ENCODE measurements at regions of chr7 and their contacts with region 1.

Region 1: GRCh38 chr7:91940572-91941341 is at the start of gene AKAP9:
- DNase-seq: peak; percentile 81
- ATAC-seq: peak; percentile 94
- H3K4me3 ChIP-seq: peak within 1 kb of the TSS; percentile 76
- H3K27ac ChIP-seq: peak within 1 kb of the TSS; percentile 58
- H3K4me1 ChIP-seq: peaks cover 22% of the 10 kb centered on the region
- H3K27me3 ChIP-seq: no peaks in the 10 kb centered on the region
- CTCF ChIP-seq: no peak
- total RNA-seq, gene AKAP9: 23.9 and 24.9 TPM in 2 replicates

Region 2: DNA sequence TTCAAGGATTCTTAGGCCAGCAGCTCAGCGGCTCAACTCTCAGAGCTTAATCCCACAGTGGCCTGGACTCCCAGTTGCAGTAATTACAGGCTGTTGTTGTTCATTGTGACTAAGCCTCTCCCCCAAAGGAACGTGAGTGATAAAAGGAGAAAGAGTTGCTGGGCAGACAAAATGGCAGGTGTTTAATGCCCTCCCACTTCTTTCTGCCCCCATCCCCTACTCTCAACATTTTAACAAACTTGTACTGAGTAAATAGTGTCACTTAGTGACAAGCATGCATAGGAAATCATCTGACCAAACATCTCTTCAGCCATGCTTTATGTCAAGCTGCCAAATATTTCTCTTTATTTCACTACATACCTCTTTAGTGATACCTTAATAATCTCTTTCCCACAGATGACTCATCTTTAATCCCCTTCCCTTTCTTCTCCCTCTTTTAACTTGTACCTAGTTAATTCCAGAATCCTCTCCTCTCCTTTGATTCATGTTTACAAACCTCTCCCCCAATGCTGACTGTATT is 47.9 kb before region 1 on chr7:
- CTCF ChIA-PET with region 1: no interaction called
- POLR2A ChIA-PET with region 1: no interaction called
- intact Hi-C with region 1: loop called (anchors 5 kb)
- DNase-seq: peak; percentile 86
- ATAC-seq: peak; percentile 87
- H3K4me3 ChIP-seq: no peak overlapping the region
- H3K27ac ChIP-seq: peak overlapping the region; percentile 19
- H3K4me1 ChIP-seq: peaks cover 23% of the 10 kb centered on the region
- H3K27me3 ChIP-seq: no peaks in the 10 kb centered on the region
- CTCF ChIP-seq: no peak

Region 3: DNA sequence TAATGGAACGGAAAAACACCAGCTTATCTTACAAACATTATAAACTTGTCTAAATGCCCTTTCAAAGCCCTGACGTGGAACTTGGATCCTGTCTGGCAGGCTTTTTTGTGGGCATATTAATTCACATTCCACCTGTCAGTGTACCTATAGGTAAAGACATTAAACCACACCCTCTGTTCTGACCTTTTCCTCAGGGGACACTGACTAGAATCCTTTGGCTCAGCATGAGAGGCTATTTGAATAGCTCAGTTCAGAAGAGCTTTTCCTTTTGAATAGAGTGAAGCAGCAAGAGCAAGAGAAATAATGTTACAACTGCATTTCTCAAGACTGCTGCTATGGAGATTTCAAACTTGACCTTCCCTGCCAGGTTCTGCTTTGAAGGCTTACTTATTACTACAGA is 116.6 kb after region 1 on chr7:
- CTCF ChIA-PET with region 1: no interaction called
- POLR2A ChIA-PET with region 1: no interaction called
- intact Hi-C with region 1: loop called (anchors 2 kb)
- DNase-seq: peak; percentile 80
- ATAC-seq: peak; percentile 91
- H3K4me3 ChIP-seq: no peak overlapping the region
- H3K27ac ChIP-seq: peak overlapping the region; percentile 17; the same call in 1 of the 2 replicates
- H3K4me1 ChIP-seq: peaks cover 22% of the 10 kb centered on the region
- H3K27me3 ChIP-seq: no peaks in the 10 kb centered on the region
- CTCF ChIP-seq: no peak

Region 4: GRCh38 chr7:92178927-92179924 is 238.5 kb after region 1 on chr7 and contains the start of gene LRRD1:
- CTCF ChIA-PET with region 1: no interaction called
- POLR2A ChIA-PET with region 1: no interaction called
- intact Hi-C with region 1: loop called (anchors 5 kb)
- DNase-seq: peak; percentile 86
- ATAC-seq: peak; percentile 98
- H3K4me3 ChIP-seq: peak within 1 kb of the TSS; percentile 63
- H3K27ac ChIP-seq: no peak within 1 kb of the TSS
- H3K4me1 ChIP-seq: peaks cover 9% of the 10 kb centered on the region
- H3K27me3 ChIP-seq: no peaks in the 10 kb centered on the region
- CTCF ChIP-seq: peak; percentile 88
- total RNA-seq, gene LRRD1: not detected in 2 replicates

Region 5: GRCh38 chr7:92925876-92926696 is 985.3 kb after region 1 on chr7:
- CTCF ChIA-PET with region 1: no interaction called
- POLR2A ChIA-PET with region 1: no interaction called
- intact Hi-C with region 1: no loop called
- DNase-seq: no peak
- ATAC-seq: no peak
- H3K4me3 ChIP-seq: no peak overlapping the region
- H3K27ac ChIP-seq: no peak overlapping the region
- H3K4me1 ChIP-seq: no peaks in the 10 kb centered on the region
- H3K27me3 ChIP-seq: no peaks in the 10 kb centered on the region
- CTCF ChIP-seq: no peak